ENCODE measurements at regions of chr20 and their contacts with region 1.

Region 1: GRCh38 chr20:57622579-57623377 is 2.6 kb upstream of the ZBP1 start:
- DNase-seq: peak; percentile 99
- H3K27ac ChIP-seq: peak overlapping the region; percentile 52; the same call in 1 of the 2 replicates
- CTCF ChIP-seq: peak; percentile 99

Region 2: GRCh38 chr20:57654363-57654997 is 31.7 kb after region 1 on chr20:
- CTCF ChIA-PET with region 1: interaction called, 20 read pairs
- POLR2A ChIA-PET with region 1: no interaction called
- DNase-seq: peak; percentile 94
- H3K27ac ChIP-seq: peak overlapping the region; percentile 83
- CTCF ChIP-seq: peak; percentile 97